K562 (cell line): ENCODE measurements at regions of chr19 and their contacts with region 1.

Region 1: DNA sequence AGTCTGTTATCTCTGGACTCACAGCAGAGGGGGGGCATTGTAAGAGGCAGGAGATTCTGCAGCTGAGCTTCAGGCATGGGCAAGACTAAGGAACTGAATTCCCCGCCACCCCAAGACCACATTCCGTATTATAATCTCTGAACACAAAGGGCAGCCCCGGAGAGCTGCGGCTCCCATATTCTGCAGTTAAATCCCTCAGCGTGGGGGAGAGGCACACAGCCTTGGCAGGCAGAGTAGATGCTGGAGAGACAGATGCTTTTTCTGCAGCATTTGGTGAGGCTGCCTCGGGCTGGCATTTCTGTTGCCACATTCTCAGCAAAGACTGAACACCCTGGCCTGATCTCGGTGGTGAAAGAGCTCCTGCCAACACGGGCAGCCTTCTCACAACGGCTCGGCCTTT is 12.9 kb downstream of the CHAF1A start:
- DNase-seq: no peak
- ATAC-seq: no peak
- H3K4me3 ChIP-seq: no peak overlapping the region
- H3K27ac ChIP-seq: no peak overlapping the region
- H3K4me1 ChIP-seq: peaks cover 4 to 19% of the 10 kb centered on the region in 2 experiments; a peak in 4 of 5 replicates
- H3K27me3 ChIP-seq: no peaks in the 10 kb centered on the region
- CTCF ChIP-seq: no peak
- EP300 ChIP-seq: no peak
- POLR2A ChIP-seq: no peak
- RAD21 ChIP-seq: no peak

Region 2: GRCh38 chr19:4429771-4430171 is 14.4 kb after region 1 on chr19:
- CTCF ChIA-PET with region 1: no interaction called
- POLR2A ChIA-PET with region 1: interaction called, 28 read pairs
- in situ Hi-C with region 1: no loop called
- intact Hi-C with region 1: no loop called
- DNase-seq: no peak
- ATAC-seq: no peak
- H3K4me3 ChIP-seq: no peak overlapping the region
- H3K27ac ChIP-seq: no peak overlapping the region
- H3K4me1 ChIP-seq: peaks cover 0 to 2% of the 10 kb centered on the region in 2 experiments; a peak in 1 of 5 replicates
- H3K27me3 ChIP-seq: no peaks in the 10 kb centered on the region
- CTCF ChIP-seq: no peak
- EP300 ChIP-seq: no peak
- POLR2A ChIP-seq: no peak
- RAD21 ChIP-seq: no peak